ENCODE measurements at regions of chr10 and their contacts with region 1.

Region 1: GRCh38 chr10:130190055-130190736 is 54.0 kb downstream of the GLRX3 start:
- DNase-seq: peak; percentile 97

Region 2: GRCh38 chr10:130215151-130215930 is 25.1 kb after region 1 on chr10:
- intact Hi-C with region 1: no loop called
- DNase-seq: peak; percentile 75

Region 3: GRCh38 chr10:130232166-130233034 is 42.2 kb after region 1 on chr10:
- intact Hi-C with region 1: loop called in 1 of 2 experiments (anchors 1 kb)
- DNase-seq: peak; percentile 44

Region 4: GRCh38 chr10:131496351-131497052 is 1306.3 kb after region 1 on chr10:
- intact Hi-C with region 1: loop called in 1 of 2 experiments (anchors 5 kb)
- DNase-seq: peak; percentile 38

Region 5: DNA sequence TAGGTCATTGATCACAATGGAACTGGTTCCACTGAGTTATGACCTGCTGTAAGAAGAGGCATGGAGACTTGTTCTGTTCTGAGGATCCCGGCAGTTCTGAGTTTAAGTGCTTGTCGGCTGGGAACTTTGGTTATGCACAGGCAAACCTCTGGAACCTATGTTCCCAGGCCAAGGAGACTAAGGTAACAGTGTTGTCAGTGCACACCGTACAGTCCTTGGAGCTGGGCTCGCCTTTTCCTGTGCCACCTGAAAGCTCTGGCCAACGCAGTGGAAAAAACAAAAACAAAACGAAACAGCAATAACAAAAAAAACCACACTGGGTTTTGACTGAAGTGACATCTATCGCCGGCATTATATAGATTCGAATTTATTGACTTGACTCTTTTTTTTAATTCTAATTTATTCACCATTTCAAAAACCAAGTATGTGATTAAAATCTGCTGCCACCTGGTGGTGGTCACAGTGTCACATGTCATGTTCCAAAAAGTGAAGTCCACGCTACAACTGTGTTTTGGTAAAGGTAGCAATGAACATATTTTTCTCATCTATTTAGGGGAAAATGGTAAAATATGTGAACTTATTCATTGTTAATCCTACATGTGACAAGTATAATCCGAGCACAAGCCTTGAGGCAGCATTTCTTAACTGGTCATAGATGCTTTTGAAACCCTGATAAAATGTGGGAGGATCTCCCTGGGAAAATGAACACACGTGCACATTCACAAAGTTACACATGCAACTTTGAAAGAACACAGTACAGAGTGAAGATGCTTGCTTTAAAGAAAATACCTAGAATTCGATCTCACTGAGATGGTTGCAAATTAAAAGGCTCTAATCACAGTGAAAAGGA is 1596.8 kb after region 1 on chr10:
- intact Hi-C with region 1: loop called in 1 of 2 experiments (anchors 5 kb)
- DNase-seq: no peak

Region 6: DNA sequence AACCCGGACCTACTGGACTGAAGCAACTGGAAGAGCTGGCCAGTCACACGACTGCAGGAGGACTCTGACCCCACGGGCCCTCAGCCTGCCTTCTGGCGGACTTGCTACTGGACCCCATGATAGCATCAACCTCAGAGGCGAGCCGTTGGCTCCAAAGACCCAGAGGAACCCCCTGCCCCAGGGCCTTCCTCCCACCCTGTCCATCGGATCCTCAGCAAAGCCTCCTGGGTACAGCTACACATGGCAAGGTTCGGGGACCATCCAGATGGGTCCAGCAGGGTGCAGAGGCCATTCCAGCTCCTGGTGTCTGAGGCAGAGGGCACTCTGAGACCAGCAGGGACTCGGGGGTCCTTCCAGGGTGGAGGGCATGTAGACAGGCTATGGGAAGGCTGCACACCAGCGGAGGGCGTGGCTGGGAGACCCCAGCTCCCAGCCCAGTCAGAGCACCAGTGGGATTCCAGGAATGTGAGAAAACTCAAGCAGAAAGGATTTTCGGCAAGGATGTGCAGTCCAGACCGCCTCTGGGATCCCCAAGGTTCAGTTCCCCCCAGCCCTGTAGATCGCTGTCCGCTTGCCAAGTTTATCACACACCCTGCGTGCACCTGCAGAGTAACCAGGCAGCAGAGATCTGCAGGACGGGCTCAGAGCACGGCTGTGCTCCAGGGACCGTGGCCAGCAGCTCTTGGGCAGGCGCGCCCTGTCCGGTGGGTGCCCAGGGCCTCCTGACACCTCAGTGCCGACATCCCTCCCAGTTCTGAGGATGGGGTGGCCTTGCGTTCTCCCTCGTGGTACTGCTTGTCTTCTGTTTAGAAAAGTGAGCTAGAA is 1620.8 kb after region 1 on chr10:
- intact Hi-C with region 1: no loop called
- DNase-seq: peak; percentile 72

Measured in posterior vena cava (tissue), 2 donors.